ENCODE measurements at regions of chr19 and their contacts with region 1.

Region 1: GRCh38 chr19:3062168-3063102 is at the start of gene TLE5:
- DNase-seq: peak; percentile 60 to 91 (median 76)
- ATAC-seq: peak; percentile 55
- H3K4me3 ChIP-seq: peak within 1 kb of the TSS; percentile 95
- H3K4me3 Mint-ChIP-seq: peak within 1 kb of the TSS; percentile 99
- H3K27ac ChIP-seq: peak within 1 kb of the TSS; percentile 75 to 87
- H3K27ac Mint-ChIP-seq: peak within 1 kb of the TSS; percentile 96
- H3K4me1 ChIP-seq: peaks cover 72% of the 10 kb centered on the region
- H3K4me1 Mint-ChIP-seq: peaks cover 42% of the 10 kb centered on the region
- H3K27me3 ChIP-seq: no peaks in the 10 kb centered on the region
- H3K27me3 Mint-ChIP-seq: no peaks in the 10 kb centered on the region
- CTCF ChIP-seq: no peak
- total RNA-seq, gene TLE5: 722 to 793 TPM

Region 2: GRCh38 chr19:2950286-2951124 is 111.9 kb before region 1 on chr19:
- CTCF ChIA-PET with region 1: interaction called, 5 read pairs
- POLR2A ChIA-PET with region 1: interaction called, 25 read pairs
- intact Hi-C with region 1: loop called in 1 of 2 experiments (anchors 1 kb)
- DNase-seq: peak; percentile 100
- ATAC-seq: peak; percentile 95
- H3K4me3 ChIP-seq: peak overlapping the region; percentile 82
- H3K4me3 Mint-ChIP-seq: peak overlapping the region; percentile 95
- H3K27ac ChIP-seq: peak overlapping the region; percentile 97 to 98
- H3K27ac Mint-ChIP-seq: peak overlapping the region; percentile 96
- H3K4me1 ChIP-seq: peaks cover 16% of the 10 kb centered on the region
- H3K4me1 Mint-ChIP-seq: peaks cover 25% of the 10 kb centered on the region
- H3K27me3 ChIP-seq: no peaks in the 10 kb centered on the region
- H3K27me3 Mint-ChIP-seq: no peaks in the 10 kb centered on the region
- CTCF ChIP-seq: no peak

Region 3: GRCh38 chr19:2977001-2977685 is 85.3 kb before region 1 on chr19 and contains the start of gene TLE6:
- CTCF ChIA-PET with region 1: no interaction called
- POLR2A ChIA-PET with region 1: interaction called, 25 read pairs
- intact Hi-C with region 1: loop called in 1 of 2 experiments (anchors 1 kb)
- DNase-seq: peak; percentile 88 to 97 (median 92)
- ATAC-seq: peak; percentile 99
- H3K4me3 ChIP-seq: peak within 1 kb of the TSS; percentile 66
- H3K4me3 Mint-ChIP-seq: peak within 1 kb of the TSS; percentile 96
- H3K27ac ChIP-seq: no peak within 1 kb of the TSS
- H3K27ac Mint-ChIP-seq: peak within 1 kb of the TSS; percentile 86
- H3K4me1 ChIP-seq: peaks cover 32% of the 10 kb centered on the region
- H3K4me1 Mint-ChIP-seq: peaks cover 17% of the 10 kb centered on the region
- H3K27me3 ChIP-seq: peaks cover 3 to 6% of the 10 kb centered on the region in 2 experiments
- H3K27me3 Mint-ChIP-seq: peaks cover 14% of the 10 kb centered on the region
- CTCF ChIP-seq: no peak
- total RNA-seq, gene TLE6: not detected

Region 4: GRCh38 chr19:3035542-3036118 is 26.8 kb before region 1 on chr19:
- CTCF ChIA-PET with region 1: interaction called, 6 read pairs
- POLR2A ChIA-PET with region 1: interaction called, 225 read pairs
- intact Hi-C with region 1: loop called (anchors 1 kb)
- DNase-seq: peak; percentile 88 to 98 (median 92)
- ATAC-seq: peak; percentile 84
- H3K4me3 ChIP-seq: peak overlapping the region; percentile 70
- H3K4me3 Mint-ChIP-seq: peak overlapping the region; percentile 89
- H3K27ac ChIP-seq: peak overlapping the region; percentile 60 to 77
- H3K27ac Mint-ChIP-seq: peak overlapping the region; percentile 92
- H3K4me1 ChIP-seq: peaks cover 26% of the 10 kb centered on the region
- H3K4me1 Mint-ChIP-seq: peaks cover 37% of the 10 kb centered on the region
- H3K27me3 ChIP-seq: no peaks in the 10 kb centered on the region
- H3K27me3 Mint-ChIP-seq: no peaks in the 10 kb centered on the region
- CTCF ChIP-seq: no peak

Region 5: GRCh38 chr19:3116255-3116602 is 53.8 kb after region 1 on chr19:
- CTCF ChIA-PET with region 1: no interaction called
- POLR2A ChIA-PET with region 1: no interaction called
- intact Hi-C with region 1: no loop called
- DNase-seq: no peak
- ATAC-seq: no peak
- H3K4me3 ChIP-seq: no peak overlapping the region
- H3K4me3 Mint-ChIP-seq: no peak overlapping the region
- H3K27ac ChIP-seq: no peak overlapping the region
- H3K27ac Mint-ChIP-seq: no peak overlapping the region
- H3K4me1 ChIP-seq: no peaks in the 10 kb centered on the region
- H3K4me1 Mint-ChIP-seq: no peaks in the 10 kb centered on the region
- H3K27me3 ChIP-seq: no peaks in the 10 kb centered on the region
- H3K27me3 Mint-ChIP-seq: no peaks in the 10 kb centered on the region
- CTCF ChIP-seq: no peak

Region 6: GRCh38 chr19:3185482-3186376 is 123.3 kb after region 1 on chr19 and contains the start of gene NCLN:
- CTCF ChIA-PET with region 1: no interaction called
- POLR2A ChIA-PET with region 1: interaction called, 19 read pairs
- intact Hi-C with region 1: loop called in 1 of 2 experiments (anchors 5 kb)
- DNase-seq: peak; percentile 88 to 96 (median 94)
- ATAC-seq: peak; percentile 82
- H3K4me3 ChIP-seq: peak within 1 kb of the TSS; percentile 59
- H3K4me3 Mint-ChIP-seq: peak within 1 kb of the TSS; percentile 93
- H3K27ac ChIP-seq: peak within 1 kb of the TSS; percentile 62
- H3K27ac Mint-ChIP-seq: peak within 1 kb of the TSS; percentile 86
- H3K4me1 ChIP-seq: peaks cover 92% of the 10 kb centered on the region
- H3K4me1 Mint-ChIP-seq: peaks cover 57% of the 10 kb centered on the region
- H3K27me3 ChIP-seq: no peaks in the 10 kb centered on the region
- H3K27me3 Mint-ChIP-seq: no peaks in the 10 kb centered on the region
- CTCF ChIP-seq: no peak
- total RNA-seq, gene NCLN: 49.6 to 51.9 TPM

Measured in CD4-positive, alpha-beta T cell (primary cell).